HCT116 (cell line): ENCODE measurements at regions of chr3 and their contacts with region 1.

Region 1: GRCh38 chr3:117589454-117589853 is 879.9 kb downstream of the TUSC7 start:
- DNase-seq: no peak
- ATAC-seq: no peak
- H3K4me3 ChIP-seq: no peak overlapping the region
- H3K27ac ChIP-seq: no peak overlapping the region
- H3K4me1 ChIP-seq: no peaks in the 10 kb centered on the region
- H3K27me3 ChIP-seq: no peaks in the 10 kb centered on the region
- CTCF ChIP-seq: no peak
- POLR2A ChIP-seq: no peak
- RAD21 ChIP-seq: no peak

Region 2: GRCh38 chr3:117572786-117573185 is 16.7 kb before region 1 on chr3:
- CTCF ChIA-PET with region 1: no interaction called
- POLR2A ChIA-PET with region 1: no interaction called
- RAD21 ChIA-PET with region 1: no interaction called
- intact Hi-C with region 1: loop called (anchors 1 kb)
- DNase-seq: no peak
- ATAC-seq: no peak
- H3K4me3 ChIP-seq: no peak overlapping the region
- H3K27ac ChIP-seq: no peak overlapping the region
- H3K4me1 ChIP-seq: no peaks in the 10 kb centered on the region
- H3K27me3 ChIP-seq: no peaks in the 10 kb centered on the region
- CTCF ChIP-seq: no peak
- POLR2A ChIP-seq: no peak
- RAD21 ChIP-seq: no peak

Region 3: DNA sequence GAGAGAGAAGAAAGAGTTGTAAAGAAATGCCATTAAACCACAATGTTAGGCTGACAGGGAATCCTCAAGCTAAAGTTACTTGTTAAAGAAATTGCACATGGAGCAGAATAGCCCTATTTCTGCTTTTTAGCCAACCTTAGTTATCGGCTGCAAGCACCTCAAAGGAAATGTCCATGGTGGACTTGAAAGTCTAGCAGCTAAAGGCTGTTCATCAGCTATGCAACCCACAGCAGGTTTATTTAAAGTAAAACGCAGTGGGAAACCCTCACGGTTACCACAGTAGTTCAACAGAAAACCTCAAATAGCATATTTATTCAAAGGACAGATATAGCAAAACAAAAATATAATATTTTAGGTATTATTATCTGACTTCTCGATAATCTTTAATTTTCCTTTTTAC is 478.0 kb after region 1 on chr3:
- CTCF ChIA-PET with region 1: no interaction called
- POLR2A ChIA-PET with region 1: no interaction called
- RAD21 ChIA-PET with region 1: no interaction called
- intact Hi-C with region 1: no loop called
- DNase-seq: no peak
- ATAC-seq: no peak
- H3K4me3 ChIP-seq: no peak overlapping the region
- H3K27ac ChIP-seq: no peak overlapping the region
- H3K4me1 ChIP-seq: no peaks in the 10 kb centered on the region
- H3K27me3 ChIP-seq: no peaks in the 10 kb centered on the region
- CTCF ChIP-seq: no peak
- POLR2A ChIP-seq: no peak
- RAD21 ChIP-seq: no peak